ENCODE measurements at regions of chr1 and their contacts with region 1.

Region 1: DNA sequence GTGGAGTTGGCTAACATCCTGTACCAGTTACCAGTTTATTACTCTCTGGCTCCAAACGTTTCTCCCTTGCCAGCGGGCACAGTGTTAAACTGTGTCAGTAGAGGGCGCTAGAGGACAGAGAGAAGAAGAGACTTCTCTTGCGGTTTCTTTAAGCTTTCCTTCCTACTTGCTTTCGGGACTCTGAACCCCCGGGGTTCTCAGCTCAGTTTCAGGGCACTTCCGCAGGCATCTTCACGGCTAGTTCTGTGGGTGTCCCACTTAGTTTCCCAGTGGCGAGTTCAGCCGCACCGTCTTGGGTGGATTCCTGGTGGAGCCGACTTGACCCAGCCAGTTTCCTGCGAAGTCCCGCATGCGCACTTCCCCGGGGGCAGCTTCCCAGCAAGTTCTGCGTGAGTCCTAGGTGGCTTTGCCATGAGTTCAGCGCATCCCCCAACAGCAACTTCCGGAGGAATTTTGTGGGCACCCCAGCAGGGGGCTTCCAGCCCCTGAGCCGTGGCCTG is 37.9 kb upstream of the BTG2 start:
- DNase-seq: peak in 41 of 42 donors; percentile 72 to 94 (median 84)

Region 2: DNA sequence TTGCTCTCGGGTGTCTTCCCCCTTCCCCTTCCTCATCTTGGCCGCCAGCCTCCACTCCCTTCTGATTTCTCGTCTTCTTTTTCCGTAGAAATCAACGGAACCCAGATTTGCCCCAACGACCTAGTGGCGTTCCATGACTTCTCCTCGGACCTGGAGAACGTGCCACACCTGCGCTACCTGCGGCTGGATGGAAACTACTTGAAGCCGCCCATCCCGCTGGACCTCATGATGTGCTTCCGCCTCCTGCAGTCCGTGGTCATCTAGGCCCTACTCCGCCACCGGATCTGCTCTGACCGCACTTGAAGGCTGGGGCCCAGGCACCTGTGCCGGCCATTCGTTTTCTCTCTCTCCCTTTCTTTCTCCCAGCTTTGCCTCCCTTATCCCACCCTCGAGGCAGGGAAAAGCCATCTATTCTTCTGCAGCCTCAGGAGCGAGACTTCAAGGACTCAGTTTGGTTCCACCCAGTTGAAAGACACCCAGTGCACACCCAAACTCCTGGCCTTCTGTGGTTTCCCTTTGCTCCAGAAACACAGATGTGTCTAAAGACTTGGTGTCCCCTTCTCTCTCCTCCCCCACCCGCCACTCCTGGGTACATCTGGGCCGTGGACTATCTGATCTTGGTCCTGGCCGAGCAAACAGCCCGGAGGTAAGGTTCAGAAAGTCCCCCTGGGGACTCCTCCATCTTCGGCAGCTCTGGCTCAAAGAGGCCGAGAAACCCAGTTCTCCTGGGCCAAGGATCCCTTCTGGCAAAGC is 219.4 kb after region 1 on chr1:
- intact Hi-C with region 1: loop called (anchors 2 kb)
- DNase-seq: no peak